GM12878 (cell line): ENCODE measurements at regions of chr1 and their contacts with region 1.

Region 1: DNA sequence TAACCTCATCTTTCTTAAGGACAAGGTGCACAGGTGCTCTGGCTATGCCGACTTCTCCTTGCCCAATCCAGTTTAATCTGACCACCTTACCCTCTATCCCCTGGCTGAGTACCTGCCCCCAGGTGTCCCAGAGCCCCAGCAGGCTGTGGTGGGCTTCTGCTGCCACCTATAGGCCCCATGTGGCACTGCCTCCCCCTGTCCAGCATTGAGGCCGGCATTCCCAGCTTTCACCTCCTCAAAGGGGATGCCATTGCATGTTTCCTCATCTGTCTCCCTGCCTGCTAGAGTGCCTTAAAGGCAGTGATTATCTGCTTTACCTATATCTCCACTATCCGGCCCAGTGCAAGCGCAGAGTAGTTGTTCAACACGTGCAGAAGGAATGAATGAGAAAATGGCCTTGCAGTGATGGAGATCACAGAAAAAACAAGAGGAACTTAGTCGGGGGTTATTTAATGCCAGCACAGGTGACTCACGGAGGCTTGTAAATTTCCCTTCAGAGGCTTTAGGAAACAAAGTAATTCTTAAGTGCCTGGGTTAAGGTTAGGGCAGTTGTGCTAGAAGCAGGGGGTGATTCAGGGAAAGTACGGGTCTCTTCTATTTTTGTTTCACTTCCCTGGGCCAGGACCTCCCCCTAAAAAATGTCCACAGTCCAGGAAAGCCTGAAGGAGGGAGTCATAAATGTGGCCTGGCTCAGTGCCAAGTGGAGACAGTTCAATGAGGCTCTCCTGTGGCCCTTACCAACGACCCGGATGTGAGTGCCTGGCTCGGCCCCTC is 131.8 kb upstream of the NGF start:
- DNase-seq: no peak
- ATAC-seq: peak; percentile 88
- H3K4me3 ChIP-seq: no peak overlapping the region
- H3K27ac ChIP-seq: no peak overlapping the region
- H3K4me1 ChIP-seq: no peaks in the 10 kb centered on the region
- H3K27me3 ChIP-seq: no peaks in the 10 kb centered on the region
- CTCF ChIP-seq: peak; percentile 81 to 91 (median 90)
- EP300 ChIP-seq: no peak
- POLR2A ChIP-seq: no peak
- RAD21 ChIP-seq: peak; percentile 75

Region 2: GRCh38 chr1:115138968-115139367 is 330.9 kb before region 1 on chr1:
- CTCF ChIA-PET with region 1: interaction called, 55 read pairs
- POLR2A ChIA-PET with region 1: no interaction called
- RAD21 ChIA-PET with region 1: interaction called, 3 read pairs
- SMC1A ChIA-PET with region 1: interaction called, 4 read pairs
- in situ Hi-C with region 1: loop called (anchors 5 kb)
- intact Hi-C with region 1: loop called (anchors 1 kb)
- DNase-seq: peak; percentile 9
- ATAC-seq: peak; percentile 100
- H3K4me3 ChIP-seq: no peak overlapping the region
- H3K27ac ChIP-seq: no peak overlapping the region
- H3K4me1 ChIP-seq: no peaks in the 10 kb centered on the region
- H3K27me3 ChIP-seq: no peaks in the 10 kb centered on the region; a peak in 1 of 4 replicates
- CTCF ChIP-seq: peak; percentile 85 to 88 (median 86); a peak in 5 of 6 replicates
- EP300 ChIP-seq: no peak
- POLR2A ChIP-seq: no peak
- RAD21 ChIP-seq: peak; percentile 77

Region 3: DNA sequence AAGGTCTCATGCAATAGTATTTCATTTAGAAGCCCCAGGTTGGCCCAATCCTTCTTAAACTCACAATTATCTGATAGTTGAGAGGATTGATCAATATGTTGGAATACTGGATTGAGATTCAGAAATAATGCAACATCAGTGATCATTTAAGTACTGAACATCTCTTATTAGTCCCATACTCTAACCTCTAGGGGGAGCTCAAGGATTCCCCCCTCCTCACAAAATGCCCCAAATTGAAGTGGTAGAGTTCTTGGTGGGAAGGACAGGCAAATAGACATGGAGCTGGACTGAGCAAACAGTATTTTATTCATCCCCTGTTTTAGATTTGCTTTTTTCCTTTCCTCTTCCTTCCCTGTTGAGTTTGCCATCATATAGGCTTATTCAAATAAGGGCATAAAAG is 194.7 kb before region 1 on chr1:
- CTCF ChIA-PET with region 1: interaction called, 8 read pairs
- POLR2A ChIA-PET with region 1: no interaction called
- RAD21 ChIA-PET with region 1: interaction called, 5 read pairs
- SMC1A ChIA-PET with region 1: interaction called, 6 read pairs
- in situ Hi-C with region 1: no loop called
- intact Hi-C with region 1: loop called (anchors 2 kb)
- DNase-seq: no peak
- ATAC-seq: 0 out of 3 replicates have a peak, but pooled peaks have one; percentile 36
- H3K4me3 ChIP-seq: no peak overlapping the region
- H3K27ac ChIP-seq: no peak overlapping the region
- H3K4me1 ChIP-seq: no peaks in the 10 kb centered on the region
- H3K27me3 ChIP-seq: 0 out of 4 replicates have a peak, but pooled peaks cover 0 to 2% of the 10 kb centered on the region in 2 experiments
- CTCF ChIP-seq: peak; percentile 39 to 68 (median 60); a peak in 5 of 6 replicates
- EP300 ChIP-seq: no peak
- POLR2A ChIP-seq: no peak
- RAD21 ChIP-seq: peak; percentile 45